Activated naive CD4-positive, alpha-beta T cell treated with anti-CD3 and anti-CD28 coated beads for 36 hours (primary cell): ENCODE measurements at regions of chr14 and their contacts with region 1.

Region 1: DNA sequence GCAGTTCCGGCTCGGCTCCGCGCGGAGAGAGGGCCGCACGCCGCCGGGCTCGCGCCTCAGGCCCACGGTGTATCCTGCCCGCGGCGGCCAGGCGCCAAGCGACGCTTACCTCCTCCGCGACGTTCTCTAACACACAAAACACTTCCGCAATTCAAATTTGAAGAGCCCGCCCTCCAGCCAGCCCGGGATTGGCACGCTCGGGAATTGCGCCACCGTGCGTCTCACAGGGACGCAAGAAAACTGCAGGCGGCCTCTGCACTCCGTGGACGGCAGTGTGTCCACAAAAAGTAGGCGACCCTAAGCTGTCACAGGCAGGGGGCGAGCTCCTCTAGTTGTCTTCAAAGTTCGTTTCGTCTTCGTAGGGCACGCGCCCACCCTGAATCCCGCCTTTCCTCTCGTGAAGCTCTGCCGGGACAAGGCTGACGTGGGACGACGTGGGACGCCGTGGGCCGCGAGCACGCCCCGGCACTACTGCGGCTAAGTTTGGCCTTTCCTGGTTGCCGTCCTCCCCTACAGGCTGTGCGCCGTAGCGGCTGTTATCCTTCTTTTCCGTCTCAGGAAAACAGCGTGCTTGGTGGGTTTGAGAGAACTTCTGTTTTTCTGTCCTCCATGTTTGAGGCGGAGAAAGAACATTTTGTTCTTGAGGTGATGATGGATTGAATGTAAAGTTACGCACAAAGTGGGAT is at the start of gene MIS18BP1:
- DNase-seq: peak; percentile 96
- H3K4me3 Mint-ChIP-seq: peak within 1 kb of the TSS; percentile 89
- H3K27ac Mint-ChIP-seq: peak within 1 kb of the TSS; percentile 91
- H3K4me1 Mint-ChIP-seq: peaks cover 15% of the 10 kb centered on the region
- H3K27me3 Mint-ChIP-seq: no peaks in the 10 kb centered on the region
- total RNA-seq, gene MIS18BP1: 55.5 to 56.8 TPM

Region 2: DNA sequence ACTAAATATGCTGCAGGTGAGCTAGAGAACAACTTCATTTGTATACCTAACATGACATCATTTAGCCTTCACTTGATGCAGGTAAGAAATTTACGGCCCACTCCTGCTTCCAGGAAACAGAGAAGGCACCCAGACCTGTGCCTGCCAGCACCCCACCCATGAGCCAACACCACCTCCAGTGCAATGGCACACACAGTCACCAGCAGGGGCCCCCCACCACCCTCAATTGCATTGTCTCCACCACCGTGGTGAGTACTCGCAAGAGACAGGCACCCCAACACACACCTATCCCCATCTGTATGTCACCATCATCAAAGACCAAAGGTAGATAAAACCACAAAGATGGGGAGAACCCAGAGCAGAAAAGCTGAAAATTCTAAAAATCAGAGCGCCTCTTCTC is 399.1 kb before region 1 on chr14:
- CTCF ChIA-PET with region 1: no interaction called
- intact Hi-C with region 1: no loop called
- DNase-seq: peak; percentile 13
- H3K4me3 Mint-ChIP-seq: no peak overlapping the region
- H3K27ac Mint-ChIP-seq: no peak overlapping the region
- H3K4me1 Mint-ChIP-seq: no peaks in the 10 kb centered on the region
- H3K27me3 Mint-ChIP-seq: peaks cover 38% of the 10 kb centered on the region

Region 3: GRCh38 chr14:44912041-44912869 is 341.0 kb before region 1 on chr14:
- CTCF ChIA-PET with region 1: no interaction called
- intact Hi-C with region 1: loop called (anchors 1 kb)
- DNase-seq: no peak
- H3K4me3 Mint-ChIP-seq: no peak overlapping the region
- H3K27ac Mint-ChIP-seq: no peak overlapping the region
- H3K4me1 Mint-ChIP-seq: peaks cover 9% of the 10 kb centered on the region
- H3K27me3 Mint-ChIP-seq: peaks cover 23% of the 10 kb centered on the region

Region 4: GRCh38 chr14:45114327-45114726 is 138.9 kb before region 1 on chr14:
- CTCF ChIA-PET with region 1: interaction called, 3 read pairs
- intact Hi-C with region 1: loop called (anchors 1 kb)
- DNase-seq: no peak
- H3K4me3 Mint-ChIP-seq: no peak overlapping the region
- H3K27ac Mint-ChIP-seq: peak overlapping the region; percentile 68
- H3K4me1 Mint-ChIP-seq: peaks cover 23% of the 10 kb centered on the region
- H3K27me3 Mint-ChIP-seq: no peaks in the 10 kb centered on the region

Region 5: DNA sequence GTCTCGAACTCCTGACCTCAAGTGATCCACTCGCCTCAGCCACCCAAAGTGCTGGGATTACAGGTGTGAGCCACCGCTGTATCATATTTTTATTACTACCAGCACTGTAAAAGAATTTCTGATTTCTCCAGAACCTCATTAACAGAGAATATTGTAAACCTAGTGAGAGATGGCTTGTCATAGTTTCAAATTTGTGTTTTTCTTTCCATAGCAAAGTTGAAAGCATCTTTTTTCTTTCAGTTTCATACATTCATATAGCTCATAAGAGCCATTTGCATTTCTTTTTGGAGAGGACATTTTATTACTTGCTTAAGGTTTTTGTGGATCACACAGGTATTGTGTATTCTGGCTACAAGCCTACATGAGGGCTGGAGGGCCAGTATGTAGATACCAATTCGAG is 58.2 kb before region 1 on chr14:
- CTCF ChIA-PET with region 1: interaction called, 7 read pairs
- intact Hi-C with region 1: loop called (anchors 2 kb)
- DNase-seq: no peak
- H3K4me3 Mint-ChIP-seq: no peak overlapping the region
- H3K27ac Mint-ChIP-seq: no peak overlapping the region
- H3K4me1 Mint-ChIP-seq: peaks cover 13% of the 10 kb centered on the region
- H3K27me3 Mint-ChIP-seq: no peaks in the 10 kb centered on the region